RWPE1 (cell line): ENCODE measurements at regions of chr17 and their contacts with region 1.

Region 1: GRCh38 chr17:32659419-32659842 is 172.6 kb downstream of the CDK5R1 start:
- DNase-seq: peak; percentile 62
- H3K27ac ChIP-seq: no peak overlapping the region
- CTCF ChIP-seq: peak; percentile 95

Region 2: GRCh38 chr17:32519228-32520103 is 140.0 kb before region 1 on chr17:
- CTCF ChIA-PET with region 1: interaction called, 10 read pairs
- POLR2A ChIA-PET with region 1: no interaction called
- DNase-seq: peak; percentile 64
- H3K27ac ChIP-seq: peak overlapping the region; percentile 57
- CTCF ChIP-seq: no peak

Region 3: GRCh38 chr17:32596628-32597027 is 62.8 kb before region 1 on chr17:
- CTCF ChIA-PET with region 1: no interaction called
- POLR2A ChIA-PET with region 1: no interaction called
- DNase-seq: no peak
- H3K27ac ChIP-seq: no peak overlapping the region
- CTCF ChIP-seq: no peak

Region 4: DNA sequence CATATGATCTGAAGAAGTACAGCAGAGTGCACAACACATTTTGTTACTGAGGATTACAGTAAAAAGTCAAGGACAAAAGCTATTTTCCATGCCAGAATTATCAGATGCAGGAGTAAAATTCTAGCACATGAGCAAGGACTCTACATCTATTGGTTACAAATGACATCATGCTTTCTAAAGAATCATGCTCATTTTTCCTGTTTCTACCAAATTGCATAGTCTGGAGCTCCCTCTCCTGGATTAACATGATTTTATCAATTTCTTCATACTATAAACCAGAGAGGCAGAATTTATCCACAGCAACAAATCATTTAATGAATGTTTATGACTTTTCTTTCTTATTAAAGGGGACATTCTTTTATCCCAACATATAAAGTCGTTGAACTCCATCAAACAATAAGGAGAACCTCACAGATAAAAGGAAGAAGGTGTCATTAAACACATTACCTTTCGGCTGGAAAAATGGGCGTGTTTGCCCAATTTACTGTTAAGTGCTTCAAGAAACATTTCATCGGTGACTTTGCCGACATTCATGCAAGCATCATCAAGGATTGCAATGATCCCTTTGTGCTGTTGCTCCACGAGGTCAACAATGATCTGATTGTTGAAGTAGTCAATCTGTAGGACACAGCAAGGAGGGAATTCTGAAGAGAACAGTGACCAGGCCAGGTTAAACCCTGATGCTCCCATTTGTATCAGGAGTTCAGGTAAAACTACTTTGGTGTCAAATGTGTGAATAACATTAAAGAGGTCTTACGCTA is 95.8 kb after region 1 on chr17:
- CTCF ChIA-PET with region 1: interaction called, 10 read pairs
- POLR2A ChIA-PET with region 1: no interaction called
- DNase-seq: peak; percentile 64
- H3K27ac ChIP-seq: no peak overlapping the region
- CTCF ChIP-seq: peak; percentile 54